Panc1 (cell line): ENCODE measurements at regions of chr10 and their contacts with region 1.

Region 1: DNA sequence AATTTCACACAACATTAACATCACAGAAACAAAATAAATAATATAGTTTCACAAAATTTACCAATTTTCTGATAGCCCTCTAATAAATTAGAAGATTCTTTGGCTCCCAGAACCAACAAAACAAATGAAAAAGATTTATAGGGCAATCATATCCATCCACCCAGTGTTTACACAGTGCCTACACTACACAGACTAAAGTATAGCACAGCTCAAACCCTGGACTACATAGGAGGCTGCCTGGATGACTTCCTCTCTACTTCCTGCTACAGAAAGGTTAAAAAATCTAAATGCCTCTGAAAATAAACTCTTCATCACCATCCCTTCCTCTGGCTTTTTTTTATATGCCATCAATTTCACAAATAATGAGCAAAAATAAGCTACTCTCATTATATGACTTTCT is 28.4 kb downstream of the MPP7 start:
- DNase-seq: no peak
- ATAC-seq: no peak
- H3K4me3 ChIP-seq: no peak overlapping the region
- H3K27ac ChIP-seq: no peak overlapping the region
- H3K4me1 ChIP-seq: no peaks in the 10 kb centered on the region
- H3K27me3 ChIP-seq: no peaks in the 10 kb centered on the region
- CTCF ChIP-seq: no peak

Region 2: DNA sequence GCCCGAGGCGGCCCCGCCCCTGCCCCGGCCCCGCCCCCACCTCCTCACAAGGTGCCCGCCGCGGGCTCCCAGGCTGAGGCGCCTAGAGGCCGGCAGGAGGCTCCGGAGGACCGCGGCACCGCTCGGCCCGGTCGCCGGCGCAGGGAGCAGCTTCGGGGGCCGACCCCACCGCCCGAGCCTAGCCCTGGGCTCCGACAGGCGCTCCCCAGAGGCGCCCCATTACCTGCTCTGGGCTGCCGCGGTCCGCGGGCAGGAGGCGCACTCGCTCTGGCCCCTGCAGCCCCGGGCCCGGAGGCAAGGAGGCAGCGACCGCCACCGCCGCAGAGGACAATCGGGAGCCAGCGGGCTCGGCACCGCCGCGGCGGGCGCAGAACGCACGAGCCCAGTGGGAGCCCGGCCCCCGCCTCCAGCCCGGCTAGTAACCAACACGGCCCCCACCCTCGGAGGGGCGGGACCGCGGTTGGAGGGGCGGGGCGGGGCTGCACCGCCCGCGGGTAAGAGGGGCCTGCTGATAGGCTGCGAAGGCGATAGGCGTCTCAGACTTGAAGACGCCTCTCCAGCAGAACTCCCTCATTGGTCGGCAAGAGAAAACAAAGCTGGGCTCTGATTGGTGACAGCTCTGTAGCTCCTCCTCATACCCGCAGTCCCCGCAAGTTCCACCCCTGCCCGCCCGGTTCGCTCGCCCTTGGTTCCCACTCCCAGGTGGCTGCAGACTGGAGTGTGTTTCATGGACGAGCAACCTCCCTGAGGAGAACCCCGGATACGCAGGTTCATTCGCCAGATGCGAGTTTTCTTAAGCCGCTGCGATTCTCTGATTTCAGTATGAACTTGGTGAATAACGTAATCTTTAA is 28.4 kb after region 1 on chr10 and contains the start of gene MPP7:
- CTCF ChIA-PET with region 1: no interaction called
- POLR2A ChIA-PET with region 1: interaction called, 11 read pairs
- in situ Hi-C with region 1: no loop called
- intact Hi-C with region 1: no loop called
- DNase-seq: peak; percentile 73
- ATAC-seq: peak; percentile 100
- H3K4me3 ChIP-seq: peak within 1 kb of the TSS; percentile 54 to 68
- H3K27ac ChIP-seq: no peak within 1 kb of the TSS
- H3K4me1 ChIP-seq: peaks cover 3% of the 10 kb centered on the region
- H3K27me3 ChIP-seq: peaks cover 14% of the 10 kb centered on the region
- CTCF ChIP-seq: peak; percentile 55
- total RNA-seq, gene MPP7: 0.49 TPM